Common myeloid progenitor, CD34-positive (primary cell): ENCODE measurements at regions of chr17 and their contacts with region 1.

Region 1: GRCh38 chr17:64025732-64026294 is 5.4 kb upstream of the ICAM2 start:
- DNase-seq: peak; percentile 95 to 97 (median 97)
- H3K4me3 ChIP-seq: peak overlapping the region in 6 of 7 experiments; percentile 4 to 77 (median 46)
- H3K27ac ChIP-seq: peak overlapping the region; percentile 65 to 99
- H3K4me1 ChIP-seq: peaks cover 9 to 52% (median 44%) of the 10 kb centered on the region in 4 experiments
- H3K27me3 ChIP-seq: no peaks in the 10 kb centered on the region

Region 2: DNA sequence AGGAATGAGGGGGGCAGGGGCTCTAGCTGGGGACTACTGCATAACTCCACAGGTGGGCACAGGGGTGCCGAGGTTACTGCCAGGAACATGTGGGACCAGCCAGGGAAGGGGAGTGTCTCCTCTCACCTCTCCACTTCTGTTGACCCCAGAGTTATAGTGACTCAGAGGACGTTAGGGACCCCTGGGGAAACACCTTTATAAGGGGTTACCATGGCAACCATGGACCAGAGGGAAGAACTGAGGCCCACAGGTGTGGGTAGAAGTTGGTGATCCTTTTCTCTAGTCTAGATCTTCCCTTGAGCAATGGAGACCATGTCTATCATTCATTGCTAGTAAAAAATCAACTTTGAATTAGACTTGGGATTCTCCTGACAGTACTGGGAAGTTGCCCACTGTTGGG is 149.0 kb before region 1 on chr17:
- CTCF ChIA-PET with region 1: no interaction called
- POLR2A ChIA-PET with region 1: no interaction called
- DNase-seq: no peak
- H3K4me3 ChIP-seq: no peak overlapping the region
- H3K27ac ChIP-seq: no peak overlapping the region
- H3K4me1 ChIP-seq: no peaks in the 10 kb centered on the region
- H3K27me3 ChIP-seq: peaks cover 0 to 2% (median 0%) of the 10 kb centered on the region in 5 experiments

Region 3: DNA sequence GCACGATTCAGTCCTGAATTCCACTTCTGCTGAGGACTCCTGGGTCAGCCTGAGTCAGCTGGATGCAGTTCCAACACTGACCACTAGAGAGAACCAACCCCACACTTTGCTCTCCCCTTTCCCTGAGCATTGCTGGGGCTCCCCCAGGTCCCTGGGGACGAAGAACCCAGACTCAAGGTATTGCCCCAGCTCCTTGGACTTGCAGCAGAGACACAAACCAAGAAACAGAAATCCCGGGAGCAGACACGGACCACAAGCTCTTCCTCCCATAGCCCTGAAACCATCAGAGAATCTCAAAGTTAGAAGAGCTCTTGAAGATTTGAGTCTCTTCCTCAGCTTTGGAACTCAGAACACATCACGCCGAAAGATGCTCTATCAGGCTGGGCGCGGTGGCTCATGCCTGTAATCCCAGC is 106.5 kb before region 1 on chr17:
- CTCF ChIA-PET with region 1: interaction called, 100 read pairs
- POLR2A ChIA-PET with region 1: no interaction called
- DNase-seq: peak; percentile 66 to 83 (median 71)
- H3K4me3 ChIP-seq: no peak overlapping the region
- H3K27ac ChIP-seq: no peak overlapping the region
- H3K4me1 ChIP-seq: peaks cover 0 to 5% (median 0%) of the 10 kb centered on the region in 4 experiments
- H3K27me3 ChIP-seq: no peaks in the 10 kb centered on the region

Region 4: DNA sequence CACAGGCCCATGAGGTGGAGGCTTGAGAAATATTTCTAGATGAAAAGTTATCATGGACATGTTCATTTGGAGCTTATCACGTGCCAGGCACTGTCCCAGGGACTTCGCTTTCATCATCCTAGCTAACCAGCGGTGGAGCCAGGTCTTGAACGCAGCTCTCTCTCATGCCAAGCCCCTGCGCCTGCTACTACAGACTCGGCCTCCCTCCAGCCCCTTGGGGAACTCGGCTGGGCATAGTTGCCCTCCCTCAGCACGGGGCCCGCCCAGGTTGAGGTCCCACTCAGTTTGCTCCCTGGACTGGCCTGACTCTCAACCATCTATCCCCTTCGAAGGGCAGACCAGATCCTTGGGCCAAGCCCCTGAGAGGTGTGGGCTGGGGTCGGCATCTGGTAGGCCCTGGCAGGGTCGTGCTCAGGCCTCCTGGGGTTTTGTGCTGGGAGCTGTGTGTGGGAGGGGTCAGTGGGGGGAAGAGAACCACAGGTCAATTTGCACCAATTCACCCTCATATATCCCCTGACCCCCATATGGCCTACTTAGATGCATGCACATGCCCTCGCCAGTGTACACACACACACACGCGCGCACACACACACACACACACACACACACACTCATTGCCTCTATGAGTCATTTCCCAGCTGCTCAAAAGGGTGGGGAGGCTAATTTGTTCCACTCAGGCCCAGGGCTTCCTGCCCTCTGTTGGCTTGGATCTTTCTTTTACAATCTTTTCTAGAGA is 41.0 kb before region 1 on chr17:
- CTCF ChIA-PET with region 1: interaction called, 19 read pairs
- POLR2A ChIA-PET with region 1: no interaction called
- DNase-seq: peak; percentile 88 to 96 (median 94)
- H3K4me3 ChIP-seq: peak overlapping the region in 1 of 7 experiments; percentile 30
- H3K27ac ChIP-seq: peak overlapping the region in 1 of 2 experiments; percentile 71
- H3K4me1 ChIP-seq: peaks cover 7 to 71% (median 54%) of the 10 kb centered on the region in 4 experiments
- H3K27me3 ChIP-seq: no peaks in the 10 kb centered on the region

Region 5: DNA sequence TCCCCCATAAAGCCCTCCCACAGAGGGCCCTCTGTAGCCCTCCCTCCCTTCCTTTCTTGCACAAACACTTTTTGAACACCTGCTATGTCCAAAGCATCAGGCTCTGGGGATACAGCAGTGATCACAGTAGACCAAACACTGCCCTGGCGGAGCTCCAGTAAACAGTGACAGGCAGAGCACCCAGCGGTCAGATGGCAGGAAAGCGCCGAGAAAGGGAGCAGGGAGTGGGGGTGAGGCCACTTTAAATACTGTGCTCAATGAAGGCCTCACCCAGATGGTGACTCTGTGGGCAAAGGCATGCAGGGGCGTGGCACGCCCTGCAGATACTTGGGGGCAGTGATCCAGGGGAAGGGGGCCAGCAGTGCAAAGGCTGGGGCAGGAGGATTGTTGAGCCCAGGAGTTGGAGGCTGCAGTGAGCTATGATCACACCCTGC is 20.1 kb before region 1 on chr17:
- CTCF ChIA-PET with region 1: interaction called, 230 read pairs
- POLR2A ChIA-PET with region 1: interaction called, 31 read pairs
- DNase-seq: peak in 2 of 3 donors; percentile 60 to 69
- H3K4me3 ChIP-seq: peak overlapping the region in 3 of 7 experiments; percentile 11 to 51 (median 12)
- H3K27ac ChIP-seq: peak overlapping the region; percentile 42 to 80
- H3K4me1 ChIP-seq: peaks cover 0 to 51% (median 45%) of the 10 kb centered on the region in 4 experiments
- H3K27me3 ChIP-seq: no peaks in the 10 kb centered on the region

Region 6: GRCh38 chr17:64051153-64051552 is 25.3 kb after region 1 on chr17:
- CTCF ChIA-PET with region 1: interaction called, 25 read pairs
- POLR2A ChIA-PET with region 1: interaction called, 6 read pairs
- DNase-seq: no peak
- H3K4me3 ChIP-seq: no peak overlapping the region
- H3K27ac ChIP-seq: no peak overlapping the region
- H3K4me1 ChIP-seq: no peaks in the 10 kb centered on the region
- H3K27me3 ChIP-seq: no peaks in the 10 kb centered on the region

Region 7: GRCh38 chr17:64129764-64130558 is 104.1 kb after region 1 on chr17 and contains the start of gene ERN1:
- CTCF ChIA-PET with region 1: interaction called, 184 read pairs
- POLR2A ChIA-PET with region 1: interaction called, 5 read pairs
- DNase-seq: peak; percentile 86 to 94 (median 93)
- H3K4me3 ChIP-seq: peak within 1 kb of the TSS; percentile 65 to 89 (median 85)
- H3K27ac ChIP-seq: peak within 1 kb of the TSS; percentile 33 to 75
- H3K4me1 ChIP-seq: peaks cover 0 to 22% (median 18%) of the 10 kb centered on the region in 4 experiments
- H3K27me3 ChIP-seq: no peaks in the 10 kb centered on the region

Region 8: GRCh38 chr17:64158831-64159590 is 133.2 kb after region 1 on chr17:
- CTCF ChIA-PET with region 1: no interaction called
- POLR2A ChIA-PET with region 1: no interaction called
- DNase-seq: no peak
- H3K4me3 ChIP-seq: no peak overlapping the region
- H3K27ac ChIP-seq: no peak overlapping the region
- H3K4me1 ChIP-seq: peaks cover 0 to 13% (median 0%) of the 10 kb centered on the region in 4 experiments
- H3K27me3 ChIP-seq: no peaks in the 10 kb centered on the region